PC-3 (cell line): ENCODE measurements at regions of chr10 and their contacts with region 1.

Region 1: GRCh38 chr10:114157909-114158308 is 16.1 kb downstream of the CCDC186 start:
- DNase-seq: no peak
- ATAC-seq: no peak
- H3K4me3 ChIP-seq: no peak overlapping the region
- H3K27ac ChIP-seq: no peak overlapping the region
- H3K4me1 ChIP-seq: 0 out of 2 replicates have a peak, but pooled peaks cover 6% of the 10 kb centered on the region
- H3K27me3 ChIP-seq: no peaks in the 10 kb centered on the region
- CTCF ChIP-seq: peak; percentile 20; the same call in 1 of the 2 replicates

Region 2: DNA sequence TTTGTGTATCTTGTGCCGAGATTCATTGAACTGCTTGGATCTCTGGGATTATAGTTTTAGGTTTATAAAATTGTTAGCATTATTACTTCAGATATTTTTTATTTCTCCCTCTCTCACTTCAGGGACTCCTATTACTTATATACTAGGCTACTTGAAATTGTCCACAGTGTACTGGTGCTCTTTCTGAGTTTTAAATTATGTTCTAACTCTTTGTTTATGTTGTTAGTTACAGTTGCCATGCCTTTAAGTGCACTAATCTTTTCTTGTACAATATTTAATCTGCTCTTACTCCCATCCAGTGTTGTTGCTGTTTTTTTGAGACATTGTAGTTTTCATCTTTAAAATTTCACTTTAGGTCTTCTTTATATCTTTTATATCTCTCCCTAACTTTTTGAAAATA is 393.3 kb before region 1 on chr10:
- CTCF ChIA-PET with region 1: no interaction called
- POLR2A ChIA-PET with region 1: no interaction called
- intact Hi-C with region 1: no loop called
- DNase-seq: no peak
- ATAC-seq: no peak
- H3K4me3 ChIP-seq: no peak overlapping the region
- H3K27ac ChIP-seq: no peak overlapping the region
- H3K4me1 ChIP-seq: no peaks in the 10 kb centered on the region
- H3K27me3 ChIP-seq: peaks cover 54% of the 10 kb centered on the region
- CTCF ChIP-seq: no peak

Region 3: GRCh38 chr10:114953047-114953446 is 795.1 kb after region 1 on chr10:
- CTCF ChIA-PET with region 1: no interaction called
- POLR2A ChIA-PET with region 1: interaction called, 10 read pairs
- intact Hi-C with region 1: no loop called
- DNase-seq: no peak
- ATAC-seq: no peak
- H3K4me3 ChIP-seq: no peak overlapping the region
- H3K27ac ChIP-seq: no peak overlapping the region
- H3K4me1 ChIP-seq: no peaks in the 10 kb centered on the region
- H3K27me3 ChIP-seq: no peaks in the 10 kb centered on the region
- CTCF ChIP-seq: no peak

Region 4: DNA sequence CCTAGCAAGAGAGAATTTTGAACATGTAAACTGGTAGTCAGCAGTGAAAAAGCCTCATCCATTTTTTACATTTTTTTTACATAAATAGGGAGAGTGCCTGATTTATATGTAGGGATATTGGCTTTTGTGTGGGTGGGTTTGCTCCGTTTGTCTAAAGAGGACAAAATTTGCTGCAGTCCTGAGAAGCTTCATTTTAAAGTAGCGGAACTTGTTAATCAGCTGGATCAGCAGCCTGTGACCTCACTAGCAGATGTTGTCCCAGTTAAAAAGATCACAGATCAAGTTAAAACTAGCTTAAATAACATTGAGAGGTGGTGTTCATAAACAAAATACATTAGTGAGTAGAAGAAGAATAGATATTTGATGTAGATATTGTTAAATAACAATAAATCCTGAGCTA is 937.8 kb after region 1 on chr10:
- CTCF ChIA-PET with region 1: no interaction called
- POLR2A ChIA-PET with region 1: no interaction called
- intact Hi-C with region 1: no loop called
- DNase-seq: no peak
- ATAC-seq: no peak
- H3K4me3 ChIP-seq: no peak overlapping the region
- H3K27ac ChIP-seq: no peak overlapping the region
- H3K4me1 ChIP-seq: no peaks in the 10 kb centered on the region
- H3K27me3 ChIP-seq: peaks cover 61% of the 10 kb centered on the region
- CTCF ChIP-seq: no peak